Mammary epithelial cell (primary cell): ENCODE measurements at regions of chr9 and their contacts with region 1.

Region 1: GRCh38 chr9:124126571-124127289 is 115.2 kb downstream of the LHX2 start:
- DNase-seq: peak; percentile 54
- H3K4me3 ChIP-seq: no peak overlapping the region
- H3K27ac ChIP-seq: no peak overlapping the region
- H3K4me1 ChIP-seq: no peaks in the 10 kb centered on the region
- H3K27me3 ChIP-seq: no peaks in the 10 kb centered on the region
- CTCF ChIP-seq: peak; percentile 95 to 98

Region 2: DNA sequence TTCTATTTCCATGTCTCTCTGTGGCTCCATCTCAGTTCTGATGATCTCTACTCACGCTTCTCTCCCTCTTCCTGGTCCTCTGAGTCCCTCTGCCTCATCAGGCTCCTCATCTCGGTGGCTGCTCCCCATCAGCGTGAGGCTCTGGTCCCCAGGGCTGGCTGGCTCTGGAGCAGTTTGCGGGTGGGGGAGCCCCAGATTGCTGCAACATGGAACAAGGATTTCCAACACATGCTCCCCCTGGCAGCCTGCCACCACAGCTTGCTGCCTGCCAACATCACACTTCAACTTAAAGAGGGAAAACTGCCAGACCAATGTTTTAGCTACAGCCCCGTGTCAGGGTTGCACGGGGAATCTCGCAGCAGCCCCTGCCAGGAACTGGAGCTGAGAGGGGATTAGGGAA is 53.8 kb after region 1 on chr9:
- CTCF ChIA-PET with region 1: no interaction called
- dilution Hi-C with region 1: loop called (anchors 5 kb)
- in situ Hi-C with region 1: no loop called
- intact Hi-C with region 1: no loop called
- DNase-seq: no peak
- H3K4me3 ChIP-seq: no peak overlapping the region
- H3K27ac ChIP-seq: no peak overlapping the region
- H3K4me1 ChIP-seq: no peaks in the 10 kb centered on the region
- H3K27me3 ChIP-seq: no peaks in the 10 kb centered on the region
- CTCF ChIP-seq: no peak

Region 3: DNA sequence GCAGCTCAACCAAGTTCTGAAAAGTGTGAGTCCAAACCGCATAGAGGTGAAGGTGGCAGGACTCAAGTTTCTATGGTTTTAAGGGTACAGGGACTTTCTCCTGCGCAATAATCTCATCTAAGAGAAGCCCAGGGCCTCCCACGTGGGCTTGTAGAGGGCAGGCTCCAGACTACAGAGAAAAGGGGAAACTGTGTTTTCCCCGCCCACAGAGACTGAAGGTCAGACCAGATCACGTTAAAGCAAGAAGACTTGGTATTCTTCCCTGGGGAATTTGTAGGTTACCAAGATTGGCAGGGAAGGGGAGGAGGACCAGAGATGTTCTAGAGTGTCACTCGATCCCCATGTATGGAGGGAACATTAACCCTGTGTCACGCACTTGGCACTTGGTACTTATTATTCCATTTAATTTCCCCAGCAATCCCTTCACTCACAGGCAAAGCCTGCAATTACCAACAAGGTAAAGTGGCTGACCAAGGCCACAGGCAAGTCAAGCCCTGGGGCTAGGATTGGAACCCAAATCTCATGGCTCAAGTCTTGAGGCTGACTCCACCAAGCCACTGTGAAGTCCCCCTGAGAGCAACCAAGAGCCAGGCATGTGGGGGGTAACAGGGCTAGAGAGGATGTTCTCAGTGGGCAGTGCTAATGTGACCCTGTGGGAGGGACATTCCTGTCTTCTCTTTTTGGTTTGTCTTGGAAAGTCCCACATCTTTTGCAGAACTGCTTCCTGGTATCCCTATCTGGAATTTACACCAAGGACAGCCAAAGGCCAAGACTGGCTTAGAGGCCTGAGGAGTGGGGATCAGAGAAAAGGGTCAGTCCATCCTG is 112.7 kb after region 1 on chr9:
- CTCF ChIA-PET with region 1: no interaction called
- dilution Hi-C with region 1: no loop called
- in situ Hi-C with region 1: no loop called
- intact Hi-C with region 1: no loop called
- DNase-seq: no peak
- H3K4me3 ChIP-seq: no peak overlapping the region
- H3K27ac ChIP-seq: no peak overlapping the region
- H3K4me1 ChIP-seq: no peaks in the 10 kb centered on the region
- H3K27me3 ChIP-seq: peaks cover 5% of the 10 kb centered on the region
- CTCF ChIP-seq: no peak

Region 4: GRCh38 chr9:124309665-124310064 is 182.9 kb after region 1 on chr9:
- CTCF ChIA-PET with region 1: no interaction called
- dilution Hi-C with region 1: no loop called
- in situ Hi-C with region 1: loop called in 1 of 2 experiments (anchors 10 kb)
- intact Hi-C with region 1: no loop called
- DNase-seq: peak; percentile 90
- H3K4me3 ChIP-seq: no peak overlapping the region
- H3K27ac ChIP-seq: peak overlapping the region; percentile 3
- H3K4me1 ChIP-seq: peaks cover 30% of the 10 kb centered on the region
- H3K27me3 ChIP-seq: no peaks in the 10 kb centered on the region
- CTCF ChIP-seq: no peak

Region 5: DNA sequence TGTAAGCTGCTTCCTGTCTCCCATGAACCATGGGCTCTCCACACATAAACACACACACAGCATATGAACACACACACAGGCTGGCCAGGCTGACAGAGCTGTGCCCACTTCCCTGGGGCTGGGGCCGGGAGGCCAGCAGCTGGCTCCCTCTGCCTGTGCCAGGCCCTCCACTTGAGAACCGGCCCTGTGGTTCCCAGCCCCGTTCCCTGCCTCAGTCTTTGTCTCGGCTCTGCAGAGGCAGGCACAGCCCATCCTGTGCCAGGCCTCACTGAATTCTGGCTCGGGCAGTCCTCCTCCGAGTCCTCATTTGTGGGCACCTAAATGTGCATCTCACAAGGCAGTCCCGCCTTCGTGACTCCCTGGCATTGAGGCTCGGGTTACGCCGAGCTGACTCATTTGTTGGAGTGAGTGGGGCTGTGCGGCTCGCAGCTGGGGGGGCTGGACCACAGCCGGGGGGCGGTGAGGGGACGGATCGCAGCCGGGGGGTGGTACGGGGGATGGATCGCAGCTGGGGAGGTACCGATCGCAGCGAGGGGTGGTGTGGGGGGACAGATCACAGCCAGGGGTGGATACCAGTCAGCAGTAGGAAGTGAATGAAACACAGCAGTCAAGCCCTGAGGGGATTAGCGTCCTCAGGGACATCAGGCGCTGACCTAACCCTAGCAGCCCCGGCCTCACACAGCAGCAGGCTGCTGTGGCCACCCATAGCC is 216.2 kb after region 1 on chr9:
- CTCF ChIA-PET with region 1: no interaction called
- dilution Hi-C with region 1: no loop called
- in situ Hi-C with region 1: no loop called
- intact Hi-C with region 1: loop called (anchors 5 kb)
- DNase-seq: peak; percentile 80
- H3K4me3 ChIP-seq: no peak overlapping the region
- H3K27ac ChIP-seq: no peak overlapping the region
- H3K4me1 ChIP-seq: peaks cover 16% of the 10 kb centered on the region
- H3K27me3 ChIP-seq: no peaks in the 10 kb centered on the region
- CTCF ChIP-seq: no peak

Region 6: GRCh38 chr9:124532897-124533296 is 406.2 kb after region 1 on chr9:
- CTCF ChIA-PET with region 1: no interaction called
- dilution Hi-C with region 1: no loop called
- in situ Hi-C with region 1: no loop called
- intact Hi-C with region 1: loop called (anchors 10 kb)
- DNase-seq: no peak
- H3K4me3 ChIP-seq: no peak overlapping the region
- H3K27ac ChIP-seq: no peak overlapping the region
- H3K4me1 ChIP-seq: no peaks in the 10 kb centered on the region
- H3K27me3 ChIP-seq: no peaks in the 10 kb centered on the region
- CTCF ChIP-seq: peak in 1 of 2 donors; percentile 4

Region 7: GRCh38 chr9:124675261-124676158 is 548.8 kb after region 1 on chr9:
- CTCF ChIA-PET with region 1: no interaction called
- dilution Hi-C with region 1: no loop called
- in situ Hi-C with region 1: no loop called
- intact Hi-C with region 1: no loop called
- DNase-seq: no peak
- H3K4me3 ChIP-seq: no peak overlapping the region
- H3K27ac ChIP-seq: no peak overlapping the region
- H3K4me1 ChIP-seq: no peaks in the 10 kb centered on the region
- H3K27me3 ChIP-seq: no peaks in the 10 kb centered on the region
- CTCF ChIP-seq: no peak